CD8-positive, alpha-beta memory T cell (primary cell): ENCODE measurements at regions of chr2 and their contacts with region 1.

Region 1: DNA sequence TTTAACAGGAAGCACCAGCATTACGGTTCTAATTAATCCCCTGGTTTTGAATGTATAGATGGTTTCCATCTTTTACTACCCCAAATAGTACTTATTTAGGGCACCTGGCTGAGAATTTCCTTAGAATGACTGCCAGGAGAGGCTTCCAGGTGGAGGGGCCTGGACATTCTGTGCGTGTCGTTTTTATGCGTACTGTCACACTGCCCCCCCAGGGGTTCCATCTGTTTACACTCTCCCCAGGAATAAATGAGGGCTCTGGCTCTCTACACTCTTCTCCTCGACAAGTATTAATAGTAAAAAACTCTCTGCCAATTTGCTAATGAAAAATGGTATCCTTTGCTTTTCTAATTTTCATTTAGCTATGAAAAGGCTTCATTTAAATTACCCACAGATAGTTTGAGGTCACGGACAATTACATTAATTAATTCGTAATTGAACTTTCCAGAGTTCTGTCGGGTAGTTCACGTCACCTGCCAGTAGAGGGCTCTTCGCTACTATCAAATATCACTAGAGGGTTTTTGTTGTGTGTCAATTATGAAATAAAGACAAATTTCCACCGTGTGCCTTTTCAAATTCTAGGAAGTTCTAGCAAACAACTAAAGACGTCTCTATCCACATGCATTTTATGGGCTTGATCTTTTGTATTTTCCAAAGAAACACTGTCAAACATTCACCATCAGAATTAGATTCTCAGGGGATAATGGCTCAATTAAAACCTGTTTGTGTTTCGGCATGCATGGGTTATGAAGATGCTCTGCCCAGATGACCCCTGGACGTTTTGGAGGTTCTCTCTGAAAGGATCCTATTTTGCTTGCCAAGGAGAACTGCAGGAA is 88.8 kb upstream of the ASB18 start:
- DNase-seq: peak in 2 of 5 donors; percentile 23 to 26
- H3K4me3 ChIP-seq: no peak overlapping the region
- H3K4me3 Mint-ChIP-seq: no peak overlapping the region
- H3K27ac ChIP-seq: no peak overlapping the region
- H3K27ac Mint-ChIP-seq: no peak overlapping the region
- H3K4me1 ChIP-seq: no peaks in the 10 kb centered on the region
- H3K4me1 Mint-ChIP-seq: peaks cover 4 to 6% (median 5%) of the 10 kb centered on the region in 3 donors
- H3K27me3 ChIP-seq: no peaks in the 10 kb centered on the region
- H3K27me3 Mint-ChIP-seq: peaks cover 7 to 28% of the 10 kb centered on the region in 2 donors

Region 2: GRCh38 chr2:236394571-236394970 is 41.6 kb after region 1 on chr2:
- CTCF ChIA-PET with region 1: no interaction called
- POLR2A ChIA-PET with region 1: no interaction called
- DNase-seq: no peak
- H3K4me3 ChIP-seq: no peak overlapping the region
- H3K4me3 Mint-ChIP-seq: no peak overlapping the region
- H3K27ac ChIP-seq: no peak overlapping the region
- H3K27ac Mint-ChIP-seq: no peak overlapping the region
- H3K4me1 ChIP-seq: no peaks in the 10 kb centered on the region
- H3K4me1 Mint-ChIP-seq: no peaks in the 10 kb centered on the region
- H3K27me3 ChIP-seq: no peaks in the 10 kb centered on the region
- H3K27me3 Mint-ChIP-seq: peaks cover under 1 to 16% of the 10 kb centered on the region in 2 donors

Region 3: DNA sequence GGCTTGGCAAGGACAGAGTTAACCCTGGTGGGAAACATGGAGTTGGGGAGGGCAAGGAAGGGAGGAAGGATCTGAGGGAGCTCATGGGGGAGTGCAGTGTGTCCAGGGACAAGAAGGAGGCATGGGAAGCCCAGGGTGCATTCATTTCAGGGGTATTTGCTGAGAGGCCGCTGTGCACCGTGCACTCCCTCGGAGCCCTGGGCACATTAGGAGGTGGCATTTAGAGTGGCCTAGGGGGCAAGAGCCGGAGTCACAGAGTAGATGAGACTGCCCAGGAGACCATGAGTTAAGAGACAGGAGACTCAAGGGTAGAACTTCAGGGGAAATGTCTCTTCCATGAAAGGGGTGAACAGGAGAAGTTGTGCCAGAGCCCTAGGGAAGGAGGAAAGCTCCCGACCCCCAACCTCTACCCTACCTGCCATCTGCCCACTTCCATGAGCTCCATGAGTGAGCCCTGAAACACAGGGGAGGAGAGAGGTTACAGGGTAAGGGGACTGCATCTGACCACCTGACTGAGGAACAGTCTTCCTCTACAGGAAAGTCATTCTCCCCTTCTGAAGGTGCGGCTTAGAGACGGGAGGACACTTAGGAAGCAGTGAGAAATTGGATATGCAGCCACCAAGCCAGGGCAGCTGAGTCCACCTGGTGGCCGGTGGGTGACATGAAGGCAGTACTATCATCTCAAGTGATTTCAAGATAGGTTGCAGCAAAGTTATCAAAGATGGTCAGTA is 674.2 kb after region 1 on chr2:
- CTCF ChIA-PET with region 1: interaction called, 13 read pairs
- POLR2A ChIA-PET with region 1: no interaction called
- DNase-seq: peak; percentile 3 to 53 (median 14)
- H3K4me3 ChIP-seq: no peak overlapping the region
- H3K4me3 Mint-ChIP-seq: no peak overlapping the region
- H3K27ac ChIP-seq: no peak overlapping the region
- H3K27ac Mint-ChIP-seq: no peak overlapping the region
- H3K4me1 ChIP-seq: no peaks in the 10 kb centered on the region
- H3K4me1 Mint-ChIP-seq: no peaks in the 10 kb centered on the region
- H3K27me3 ChIP-seq: no peaks in the 10 kb centered on the region
- H3K27me3 Mint-ChIP-seq: peaks cover 11 to 14% of the 10 kb centered on the region in 2 donors